Right lobe of liver (tissue), 6 donors: ENCODE measurements at regions of chr21 and their contacts with region 1.

Region 1: GRCh38 chr21:45330075-45330781 is 42.5 kb upstream of the POFUT2 start:
- DNase-seq: peak; percentile 87 to 92 (median 90)
- ATAC-seq: peak; percentile 79 to 87 (median 83)
- H3K4me3 ChIP-seq: peak overlapping the region in 1 of 3 donors; percentile 33
- H3K27ac ChIP-seq: peak overlapping the region; percentile 46 to 71 (median 53)
- H3K4me1 ChIP-seq: peaks cover 0 to 21% (median 8%) of the 10 kb centered on the region in 4 donors
- H3K27me3 ChIP-seq: no peaks in the 10 kb centered on the region
- CTCF ChIP-seq: no peak
- POLR2A ChIP-seq: no peak

Region 2: GRCh38 chr21:45386721-45387371 is 56.6 kb after region 1 on chr21:
- intact Hi-C with region 1: no loop called
- DNase-seq: peak; percentile 34 to 50 (median 46)
- ATAC-seq: peak; percentile 59 to 76 (median 64)
- H3K4me3 ChIP-seq: no peak overlapping the region
- H3K27ac ChIP-seq: no peak overlapping the region
- H3K4me1 ChIP-seq: no peaks in the 10 kb centered on the region
- H3K27me3 ChIP-seq: no peaks in the 10 kb centered on the region
- CTCF ChIP-seq: peak in 2 of 4 donors; percentile 2 to 12
- POLR2A ChIP-seq: no peak

Region 3: DNA sequence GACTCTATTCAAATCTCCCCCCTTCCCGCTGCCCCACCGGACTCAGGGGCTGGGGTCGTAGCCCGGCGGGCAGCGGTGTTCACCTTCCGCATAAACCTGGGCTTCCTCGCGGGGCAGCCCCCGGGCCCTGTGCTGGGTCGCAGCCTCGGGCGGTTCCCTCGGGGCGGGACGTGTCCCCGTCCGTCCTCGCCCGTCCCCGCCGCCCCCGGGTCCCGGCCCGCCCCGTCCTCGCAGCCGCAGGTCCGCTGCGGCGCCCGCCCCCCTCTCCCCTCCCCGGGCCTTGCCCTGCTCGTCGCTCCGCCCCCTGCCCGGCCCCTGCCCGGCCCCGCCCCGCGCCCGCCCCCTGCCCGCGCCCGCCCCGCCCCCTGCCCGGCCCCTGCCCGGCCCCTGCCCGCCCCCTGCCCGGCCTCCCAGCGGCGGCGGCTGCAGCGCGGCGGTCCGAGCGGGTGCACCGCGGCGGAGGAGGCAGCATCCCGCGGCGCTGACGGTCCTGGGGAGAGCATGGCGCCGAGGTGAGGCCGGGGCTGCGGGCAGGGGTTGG is 74.6 kb after region 1 on chr21 and contains the start of gene COL18A1:
- intact Hi-C with region 1: loop called in 1 of 2 experiments (anchors 10 kb)
- DNase-seq: peak; percentile 72 to 77 (median 72)
- ATAC-seq: peak; percentile 39 to 50 (median 43)
- H3K4me3 ChIP-seq: peak within 1 kb of the TSS; percentile 53 to 60 (median 57)
- H3K27ac ChIP-seq: peak within 1 kb of the TSS in 2 of 3 donors; percentile 26 to 77
- H3K4me1 ChIP-seq: peaks cover 0 to 16% (median 5%) of the 10 kb centered on the region in 4 donors
- H3K27me3 ChIP-seq: no peaks in the 10 kb centered on the region
- CTCF ChIP-seq: no peak
- POLR2A ChIP-seq: no peak
- total RNA-seq, gene COL18A1: 261 to 487 (median 297) TPM